ENCODE measurements at regions of chr6 and their contacts with region 1.

Region 1: GRCh38 chr6:81648502-81648901 is 104.0 kb downstream of the TENT5A start:
- DNase-seq: no peak
- ATAC-seq: no peak
- H3K4me3 ChIP-seq: no peak overlapping the region
- H3K27ac ChIP-seq: no peak overlapping the region
- H3K4me1 ChIP-seq: no peaks in the 10 kb centered on the region
- H3K27me3 ChIP-seq: no peaks in the 10 kb centered on the region
- CTCF ChIP-seq: no peak
- POLR2A ChIP-seq: no peak
- RAD21 ChIP-seq: no peak

Region 2: DNA sequence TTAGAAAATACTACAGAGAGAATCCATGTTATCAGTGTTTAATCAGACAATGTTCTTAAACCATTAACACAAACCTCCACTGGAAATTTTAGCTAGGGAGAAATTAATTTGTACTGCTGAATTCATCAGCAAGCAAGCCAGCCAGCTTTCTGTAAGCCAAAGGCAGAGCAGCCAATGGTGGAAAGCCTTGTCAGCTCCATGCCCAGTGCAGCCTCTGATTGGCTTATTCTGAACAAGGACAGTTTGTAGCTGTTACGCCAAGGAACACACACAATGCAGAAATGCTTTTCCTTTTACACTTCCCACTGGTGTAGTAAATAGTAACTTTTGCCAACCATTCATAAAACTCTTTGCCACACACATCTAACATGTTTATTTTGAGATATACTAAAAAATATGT is 161.0 kb before region 1 on chr6:
- CTCF ChIA-PET with region 1: no interaction called
- POLR2A ChIA-PET with region 1: no interaction called
- dilution Hi-C with region 1: no loop called
- in situ Hi-C with region 1: no loop called
- intact Hi-C with region 1: loop called (anchors 5 kb)
- DNase-seq: peak; percentile 62
- ATAC-seq: peak; percentile 90
- H3K4me3 ChIP-seq: no peak overlapping the region
- H3K27ac ChIP-seq: no peak overlapping the region
- H3K4me1 ChIP-seq: no peaks in the 10 kb centered on the region
- H3K27me3 ChIP-seq: no peaks in the 10 kb centered on the region
- CTCF ChIP-seq: no peak
- POLR2A ChIP-seq: no peak
- RAD21 ChIP-seq: no peak

Region 3: DNA sequence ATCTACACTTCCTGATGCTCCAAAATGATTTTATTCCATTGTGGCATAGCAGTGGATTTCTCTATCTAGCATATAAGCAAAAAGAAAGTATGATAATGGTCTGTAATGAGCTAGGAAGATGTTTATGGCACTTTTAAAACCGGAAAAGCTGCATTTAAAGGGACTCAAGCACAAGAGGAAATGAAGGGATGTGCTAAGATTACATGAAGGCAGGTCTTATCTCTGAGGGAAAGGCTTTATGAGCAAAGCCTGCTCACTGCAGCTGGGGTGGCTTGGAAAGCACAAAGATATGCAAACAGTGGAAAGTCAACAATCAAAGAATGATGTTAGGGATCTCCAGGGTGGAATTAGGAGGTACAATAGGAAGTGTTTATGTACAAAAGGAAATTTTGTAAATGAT is 34.2 kb before region 1 on chr6:
- CTCF ChIA-PET with region 1: no interaction called
- POLR2A ChIA-PET with region 1: no interaction called
- dilution Hi-C with region 1: no loop called
- in situ Hi-C with region 1: no loop called
- intact Hi-C with region 1: no loop called
- DNase-seq: peak; percentile 85
- ATAC-seq: peak; percentile 92
- H3K4me3 ChIP-seq: no peak overlapping the region
- H3K27ac ChIP-seq: no peak overlapping the region
- H3K4me1 ChIP-seq: peaks cover 1% of the 10 kb centered on the region; the same call in 1 of the 2 replicates
- H3K27me3 ChIP-seq: no peaks in the 10 kb centered on the region
- CTCF ChIP-seq: no peak
- POLR2A ChIP-seq: no peak
- RAD21 ChIP-seq: no peak

Region 4: DNA sequence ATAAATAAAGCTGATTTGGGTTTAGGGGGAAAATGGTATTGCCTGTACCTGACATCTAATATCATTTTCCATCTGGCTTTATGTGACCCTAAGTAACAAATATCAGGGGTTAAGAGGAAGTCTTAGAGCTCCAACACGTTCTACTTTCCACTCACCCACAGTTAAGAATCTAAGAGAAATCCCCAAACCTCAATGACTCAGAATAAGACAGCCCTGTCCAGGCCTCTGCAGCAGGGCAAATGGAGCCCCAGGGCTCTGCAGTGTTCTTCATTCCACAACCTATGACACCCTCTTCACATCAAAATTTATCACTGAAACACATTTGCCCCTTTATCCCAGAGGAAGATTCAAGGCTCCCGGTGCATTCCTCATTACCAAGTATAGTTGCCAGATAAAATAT is 124.2 kb after region 1 on chr6:
- CTCF ChIA-PET with region 1: no interaction called
- POLR2A ChIA-PET with region 1: no interaction called
- dilution Hi-C with region 1: no loop called
- in situ Hi-C with region 1: no loop called
- intact Hi-C with region 1: no loop called
- DNase-seq: peak; percentile 62
- ATAC-seq: peak; percentile 85
- H3K4me3 ChIP-seq: no peak overlapping the region
- H3K27ac ChIP-seq: no peak overlapping the region
- H3K4me1 ChIP-seq: peaks cover 2% of the 10 kb centered on the region; the same call in 1 of the 2 replicates
- H3K27me3 ChIP-seq: no peaks in the 10 kb centered on the region
- CTCF ChIP-seq: no peak
- POLR2A ChIP-seq: no peak
- RAD21 ChIP-seq: no peak